ENCODE measurements at regions of chr6 and their contacts with region 1.

Region 1: GRCh38 chr6:68634726-68635411 is at the start of gene ADGRB3:
- DNase-seq: peak; percentile 29
- H3K4me3 ChIP-seq: peak within 1 kb of the TSS; percentile 29 to 47 (median 38)
- H3K27ac ChIP-seq: no peak within 1 kb of the TSS
- H3K4me1 ChIP-seq: no peaks in the 10 kb centered on the region
- H3K27me3 ChIP-seq: peaks cover 13% of the 10 kb centered on the region
- CTCF ChIP-seq: no peak
- total RNA-seq, gene ADGRB3: not detected

Region 2: DNA sequence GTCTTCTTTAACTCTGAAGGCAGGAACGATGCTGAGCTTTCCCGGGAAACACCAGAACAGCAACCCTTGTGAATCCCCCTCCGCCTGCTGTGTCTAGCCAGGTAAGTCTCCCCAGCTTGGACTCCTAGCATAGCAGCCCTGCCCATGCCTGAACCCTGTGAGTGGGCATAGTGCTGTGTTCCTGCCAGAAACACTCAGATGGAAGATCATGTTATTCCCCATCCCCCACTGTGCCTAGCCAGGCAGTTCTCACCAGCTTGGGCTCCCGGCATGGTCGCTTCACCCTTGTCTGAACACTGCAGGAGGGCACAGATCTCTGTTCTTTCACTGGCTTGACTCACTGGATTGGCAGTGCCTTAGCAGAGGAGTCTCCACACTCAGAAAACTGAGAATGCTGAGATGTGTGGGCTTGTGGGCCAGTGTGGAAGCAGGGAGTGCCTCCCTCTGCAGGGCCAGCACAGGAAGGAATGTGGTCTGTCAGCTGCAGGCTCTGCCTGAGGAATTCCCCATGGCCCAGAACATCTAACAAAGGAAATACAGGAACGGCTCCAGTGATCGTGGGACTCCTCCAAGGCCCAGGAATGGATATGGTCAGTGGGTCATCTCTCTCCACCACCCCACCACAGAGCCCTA is 439.9 kb before region 1 on chr6:
- CTCF ChIA-PET with region 1: no interaction called
- dilution Hi-C with region 1: no loop called
- in situ Hi-C with region 1: no loop called
- intact Hi-C with region 1: no loop called
- DNase-seq: no peak
- H3K4me3 ChIP-seq: no peak overlapping the region
- H3K27ac ChIP-seq: no peak overlapping the region
- H3K4me1 ChIP-seq: no peaks in the 10 kb centered on the region
- H3K27me3 ChIP-seq: no peaks in the 10 kb centered on the region
- CTCF ChIP-seq: no peak

Region 3: DNA sequence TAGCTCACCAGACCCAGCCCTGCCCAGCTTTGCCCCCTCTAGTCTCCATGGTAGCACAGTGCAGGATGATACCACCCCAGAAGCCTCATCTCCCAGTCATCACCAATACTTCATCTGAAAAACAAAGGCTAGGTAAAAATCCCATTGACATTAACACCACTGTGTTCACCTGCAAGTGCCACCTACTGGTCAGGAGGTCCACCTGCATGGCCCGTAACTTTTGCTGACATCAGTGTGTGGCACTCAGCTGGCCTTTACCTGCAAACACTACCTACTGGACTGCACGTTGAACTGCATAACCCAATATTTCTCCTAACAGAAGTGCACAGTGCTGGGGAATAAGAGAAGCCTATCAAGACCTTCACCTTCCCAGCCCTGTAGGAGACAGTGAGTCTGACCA is 234.5 kb before region 1 on chr6:
- CTCF ChIA-PET with region 1: no interaction called
- dilution Hi-C with region 1: no loop called
- in situ Hi-C with region 1: no loop called
- intact Hi-C with region 1: no loop called
- DNase-seq: no peak
- H3K4me3 ChIP-seq: no peak overlapping the region
- H3K27ac ChIP-seq: no peak overlapping the region
- H3K4me1 ChIP-seq: no peaks in the 10 kb centered on the region
- H3K27me3 ChIP-seq: no peaks in the 10 kb centered on the region
- CTCF ChIP-seq: no peak

Region 4: DNA sequence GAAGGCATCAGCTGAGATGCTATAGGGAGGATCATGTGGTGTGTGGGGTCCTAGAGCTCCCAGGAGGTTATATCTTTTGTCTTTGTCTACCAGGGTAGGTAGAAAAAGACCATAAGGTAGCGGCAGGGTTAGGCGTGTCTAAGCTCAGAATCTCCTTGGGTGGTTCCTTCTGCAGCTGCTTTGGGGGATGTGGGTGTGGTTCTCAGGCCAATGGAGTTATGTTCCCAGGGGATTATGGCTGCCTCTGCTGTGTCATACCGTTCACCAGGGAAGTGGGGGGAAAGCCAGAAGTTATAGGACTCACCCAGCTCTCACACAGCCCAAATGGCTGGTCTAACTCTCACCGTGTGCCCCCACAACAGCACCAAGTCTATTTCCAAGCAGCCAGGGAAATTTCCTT is 107.2 kb before region 1 on chr6:
- CTCF ChIA-PET with region 1: no interaction called
- dilution Hi-C with region 1: no loop called
- in situ Hi-C with region 1: no loop called
- intact Hi-C with region 1: no loop called
- DNase-seq: no peak
- H3K4me3 ChIP-seq: no peak overlapping the region
- H3K27ac ChIP-seq: no peak overlapping the region
- H3K4me1 ChIP-seq: no peaks in the 10 kb centered on the region
- H3K27me3 ChIP-seq: no peaks in the 10 kb centered on the region
- CTCF ChIP-seq: no peak

Region 5: DNA sequence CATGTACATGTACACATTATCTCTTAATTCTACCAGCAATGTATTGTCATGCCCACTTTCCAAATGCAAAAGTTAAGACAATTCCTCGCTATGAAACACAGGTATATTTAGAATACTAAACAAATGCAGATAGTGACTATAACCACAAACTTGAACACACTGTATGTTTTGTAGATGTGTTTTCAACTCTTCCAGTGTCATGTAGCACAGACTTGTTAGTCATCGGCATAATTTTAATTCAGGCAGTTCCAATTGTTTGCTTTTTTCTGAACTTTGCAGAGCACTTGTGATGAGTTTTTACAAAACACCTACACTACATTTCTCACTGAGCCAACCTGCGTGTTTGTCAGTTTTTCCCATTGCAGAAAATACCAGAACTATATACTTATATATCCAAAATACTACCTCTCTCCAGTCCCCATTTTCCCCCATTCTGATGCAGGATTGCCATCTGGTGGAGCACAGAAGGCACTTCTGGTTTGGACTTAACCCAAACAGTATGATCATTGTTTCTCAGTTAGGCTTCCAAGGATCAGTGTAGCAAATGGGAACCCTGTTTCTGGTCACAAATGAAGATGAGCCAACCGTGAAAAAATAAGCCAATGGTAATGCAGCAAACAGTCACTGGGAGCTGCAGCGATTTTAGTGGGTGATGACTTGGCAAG is 143.6 kb after region 1 on chr6:
- CTCF ChIA-PET with region 1: no interaction called
- dilution Hi-C with region 1: no loop called
- in situ Hi-C with region 1: no loop called
- intact Hi-C with region 1: loop called (anchors 1 kb)
- DNase-seq: no peak
- H3K4me3 ChIP-seq: no peak overlapping the region
- H3K27ac ChIP-seq: no peak overlapping the region
- H3K4me1 ChIP-seq: no peaks in the 10 kb centered on the region
- H3K27me3 ChIP-seq: no peaks in the 10 kb centered on the region
- CTCF ChIP-seq: peak; percentile 10 to 48

Measured in mammary epithelial cell (primary cell).